Posterior vena cava (tissue), 2 donors: ENCODE measurements at regions of chr5 and their contacts with region 1.

Region 1: DNA sequence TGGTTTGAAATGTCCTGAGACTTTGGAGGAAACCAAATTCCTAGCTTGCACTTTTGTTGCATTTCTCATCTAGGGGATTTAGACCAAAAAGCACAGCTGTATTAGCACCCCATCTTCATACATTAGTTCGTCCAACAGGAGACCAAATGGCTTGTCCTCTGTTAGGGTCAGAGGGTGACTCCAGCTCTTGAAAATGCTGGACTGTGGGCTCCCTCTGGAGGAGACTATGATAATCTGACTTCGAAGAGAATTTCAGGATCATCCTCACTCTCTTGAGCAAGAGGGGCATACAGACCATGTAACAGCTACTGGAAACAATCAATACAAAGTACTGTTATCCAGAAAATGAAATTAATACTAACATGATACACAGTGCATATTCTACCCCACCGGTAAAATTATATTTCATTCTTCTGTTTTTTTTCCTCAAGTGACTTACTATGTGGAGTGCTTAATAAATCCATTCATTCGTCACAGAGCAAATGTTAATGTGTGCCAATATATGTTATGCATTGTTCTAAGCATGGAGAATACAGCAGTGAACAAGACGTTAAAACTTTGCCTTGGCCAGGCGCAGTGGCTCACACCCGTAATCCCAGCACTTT is 63.7 kb upstream of the PPP2CA start:
- DNase-seq: no peak

Region 2: GRCh38 chr5:134004592-134005375 is 284.8 kb before region 1 on chr5 and contains the start of gene VDAC1:
- intact Hi-C with region 1: no loop called
- DNase-seq: peak; percentile 96
- total RNA-seq, gene VDAC1: 104 to 105 TPM

Region 3: DNA sequence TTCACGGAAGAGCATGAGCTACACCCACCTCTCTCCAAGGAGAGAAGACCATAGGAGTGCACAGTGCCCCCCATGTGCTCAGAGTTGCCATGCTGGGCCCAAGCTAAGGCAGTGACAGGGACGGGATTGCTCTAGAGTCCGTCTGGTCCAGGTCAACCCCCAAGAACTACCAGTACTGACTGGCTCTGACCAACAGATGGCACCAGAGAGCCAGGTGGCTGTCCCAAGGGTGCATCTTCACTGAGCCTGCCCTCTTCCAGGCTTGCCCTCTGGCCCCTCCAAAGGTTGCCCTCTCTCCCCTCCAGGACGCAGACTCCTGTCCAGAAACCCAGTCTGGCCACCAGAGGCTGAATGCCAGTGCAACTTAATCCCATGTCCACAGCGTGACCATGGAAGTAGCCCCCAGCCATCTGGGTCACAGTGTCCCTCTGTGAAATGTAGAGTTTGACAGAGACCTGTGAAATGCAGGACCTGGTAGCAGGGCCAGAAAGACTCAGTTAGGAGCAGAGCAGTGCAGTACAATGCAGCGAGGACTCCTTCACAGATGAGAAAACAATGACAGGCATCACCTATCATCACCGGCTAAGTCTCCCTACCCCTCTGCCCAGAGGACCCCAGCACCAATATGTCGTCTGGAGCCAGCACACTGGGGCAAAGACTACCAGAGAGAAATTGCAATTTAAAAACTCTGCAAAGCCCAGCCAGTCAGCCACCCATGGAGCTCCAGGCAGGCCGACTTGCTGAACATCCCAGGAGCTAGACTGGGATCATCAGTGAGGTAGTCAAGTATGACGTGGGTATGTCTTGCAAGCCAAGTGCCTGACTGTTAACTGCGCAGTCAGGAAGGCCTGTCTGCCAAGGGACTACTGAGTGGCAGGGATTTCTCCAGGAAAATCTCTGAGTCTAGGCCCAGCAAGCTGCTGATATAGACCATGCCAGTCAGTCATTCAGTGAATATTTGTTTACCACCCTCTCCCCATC is 105.2 kb before region 1 on chr5:
- intact Hi-C with region 1: loop called (anchors 2 to 5 kb)
- DNase-seq: peak; percentile 88